Activated naive CD4-positive, alpha-beta T cell treated with anti-CD3 and anti-CD28 coated beads for 36 hours (primary cell): ENCODE measurements at regions of chr21 and their contacts with region 1.

Region 1: GRCh38 chr21:24428591-24429199 is 1178.6 kb downstream of the MRPL39 start:
- DNase-seq: peak; percentile 22
- H3K4me3 Mint-ChIP-seq: peak overlapping the region; percentile 79
- H3K27ac Mint-ChIP-seq: peak overlapping the region; percentile 87
- H3K4me1 Mint-ChIP-seq: peaks cover 8% of the 10 kb centered on the region
- H3K27me3 Mint-ChIP-seq: no peaks in the 10 kb centered on the region

Region 2: GRCh38 chr21:24290151-24290833 is 138.4 kb before region 1 on chr21:
- CTCF ChIA-PET with region 1: no interaction called
- intact Hi-C with region 1: loop called (anchors 5 kb)
- DNase-seq: peak; percentile 69
- H3K4me3 Mint-ChIP-seq: peak overlapping the region; percentile 41
- H3K27ac Mint-ChIP-seq: no peak overlapping the region
- H3K4me1 Mint-ChIP-seq: peaks cover 7% of the 10 kb centered on the region
- H3K27me3 Mint-ChIP-seq: no peaks in the 10 kb centered on the region

Region 3: GRCh38 chr21:24486973-24487372 is 58.3 kb after region 1 on chr21:
- CTCF ChIA-PET with region 1: no interaction called
- intact Hi-C with region 1: no loop called
- DNase-seq: no peak
- H3K4me3 Mint-ChIP-seq: no peak overlapping the region
- H3K27ac Mint-ChIP-seq: no peak overlapping the region
- H3K4me1 Mint-ChIP-seq: no peaks in the 10 kb centered on the region
- H3K27me3 Mint-ChIP-seq: no peaks in the 10 kb centered on the region

Region 4: GRCh38 chr21:24577301-24577700 is 148.6 kb after region 1 on chr21:
- CTCF ChIA-PET with region 1: no interaction called
- intact Hi-C with region 1: no loop called
- DNase-seq: no peak
- H3K4me3 Mint-ChIP-seq: no peak overlapping the region
- H3K27ac Mint-ChIP-seq: no peak overlapping the region
- H3K4me1 Mint-ChIP-seq: no peaks in the 10 kb centered on the region
- H3K27me3 Mint-ChIP-seq: no peaks in the 10 kb centered on the region

Region 5: GRCh38 chr21:25561668-25562641 is 1133.3 kb after region 1 on chr21:
- CTCF ChIA-PET with region 1: no interaction called
- intact Hi-C with region 1: loop called (anchors 5 kb)
- DNase-seq: peak; percentile 81
- H3K4me3 Mint-ChIP-seq: peak overlapping the region; percentile 91
- H3K27ac Mint-ChIP-seq: peak overlapping the region; percentile 96
- H3K4me1 Mint-ChIP-seq: peaks cover 45% of the 10 kb centered on the region
- H3K27me3 Mint-ChIP-seq: no peaks in the 10 kb centered on the region